H1 (cell line): ENCODE measurements at regions of chr16 and their contacts with region 1.

Region 1: GRCh38 chr16:65121870-65122723 is at the start of gene CDH11:
- DNase-seq: peak in 1 of 2 experiments; percentile 81
- H3K4me3 ChIP-seq: peak within 1 kb of the TSS; percentile 49 to 77 (median 70)
- H3K27ac ChIP-seq: no peak within 1 kb of the TSS
- H3K4me1 ChIP-seq: peaks cover 7 to 18% (median 11%) of the 10 kb centered on the region in 4 experiments
- H3K27me3 ChIP-seq: peaks cover 21 to 70% (median 54%) of the 10 kb centered on the region in 4 experiments
- CTCF ChIP-seq: no peak
- EP300 ChIP-seq: no peak
- POLR2A ChIP-seq: no peak
- RAD21 ChIP-seq: no peak
- total RNA-seq, gene CDH11: 8.4 and 8.7 TPM in 2 replicates

Region 2: DNA sequence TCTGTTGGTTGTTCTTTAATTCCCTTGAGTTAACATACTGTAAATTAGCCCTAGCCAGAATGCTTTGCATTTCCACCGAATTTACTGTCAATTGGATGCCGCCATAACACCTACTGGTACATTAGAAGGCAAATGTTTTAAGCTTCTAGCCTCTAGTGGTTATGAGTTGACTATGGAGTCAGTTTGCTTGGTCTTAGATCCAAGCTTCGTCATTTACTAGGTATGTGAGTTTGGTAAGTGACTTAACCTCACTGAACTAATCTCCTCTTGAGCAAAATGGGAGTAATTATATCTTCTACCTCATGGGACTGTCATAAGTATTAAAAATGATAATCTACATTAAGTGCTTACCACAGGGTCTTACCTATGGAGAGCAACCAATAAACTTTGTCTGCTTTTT is 20.2 kb after region 1 on chr16:
- CTCF ChIA-PET with region 1: interaction called, 11 read pairs
- POLR2A ChIA-PET with region 1: interaction called, 4 read pairs
- DNase-seq: no peak
- H3K4me3 ChIP-seq: no peak overlapping the region
- H3K27ac ChIP-seq: no peak overlapping the region
- H3K4me1 ChIP-seq: no peaks in the 10 kb centered on the region
- H3K27me3 ChIP-seq: no peaks in the 10 kb centered on the region
- CTCF ChIP-seq: no peak
- EP300 ChIP-seq: no peak
- POLR2A ChIP-seq: no peak
- RAD21 ChIP-seq: no peak

Region 3: DNA sequence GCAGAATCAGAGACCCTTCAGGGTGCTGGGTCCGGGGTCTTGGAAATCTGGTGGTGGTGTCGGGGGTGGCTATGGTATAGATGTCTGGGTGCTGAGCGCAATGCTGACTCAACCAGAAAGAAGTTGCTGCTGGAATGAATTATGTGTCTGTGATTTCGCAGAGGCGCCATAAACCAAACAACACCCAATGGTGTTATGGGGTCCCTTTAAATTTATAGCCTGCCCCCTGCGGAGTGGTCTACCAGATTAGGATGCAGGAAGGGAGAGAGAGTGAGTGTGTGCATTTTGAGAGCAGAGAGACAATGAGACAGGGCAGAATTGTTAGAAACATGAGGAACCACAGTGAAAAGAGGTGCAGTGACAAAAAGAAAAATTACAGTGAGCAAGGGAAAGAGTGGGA is 100.4 kb after region 1 on chr16:
- CTCF ChIA-PET with region 1: interaction called, 4 read pairs
- POLR2A ChIA-PET with region 1: interaction called, 15 read pairs
- DNase-seq: no peak
- H3K4me3 ChIP-seq: no peak overlapping the region
- H3K27ac ChIP-seq: no peak overlapping the region
- H3K4me1 ChIP-seq: peaks cover 0 to 9% (median 3%) of the 10 kb centered on the region in 4 experiments; a peak in 2 of 7 replicates
- H3K27me3 ChIP-seq: no peaks in the 10 kb centered on the region; a peak in 2 of 7 replicates
- CTCF ChIP-seq: no peak
- EP300 ChIP-seq: no peak
- POLR2A ChIP-seq: no peak
- RAD21 ChIP-seq: no peak